AG04449 (cell line): ENCODE measurements at regions of chr12 and their contacts with region 1.

Region 1: GRCh38 chr12:50174971-50175715 is 8.0 kb upstream of the CERS5 start:
- DNase-seq: no peak
- H3K4me3 ChIP-seq: no peak overlapping the region
- CTCF ChIP-seq: peak; percentile 2

Region 2: DNA sequence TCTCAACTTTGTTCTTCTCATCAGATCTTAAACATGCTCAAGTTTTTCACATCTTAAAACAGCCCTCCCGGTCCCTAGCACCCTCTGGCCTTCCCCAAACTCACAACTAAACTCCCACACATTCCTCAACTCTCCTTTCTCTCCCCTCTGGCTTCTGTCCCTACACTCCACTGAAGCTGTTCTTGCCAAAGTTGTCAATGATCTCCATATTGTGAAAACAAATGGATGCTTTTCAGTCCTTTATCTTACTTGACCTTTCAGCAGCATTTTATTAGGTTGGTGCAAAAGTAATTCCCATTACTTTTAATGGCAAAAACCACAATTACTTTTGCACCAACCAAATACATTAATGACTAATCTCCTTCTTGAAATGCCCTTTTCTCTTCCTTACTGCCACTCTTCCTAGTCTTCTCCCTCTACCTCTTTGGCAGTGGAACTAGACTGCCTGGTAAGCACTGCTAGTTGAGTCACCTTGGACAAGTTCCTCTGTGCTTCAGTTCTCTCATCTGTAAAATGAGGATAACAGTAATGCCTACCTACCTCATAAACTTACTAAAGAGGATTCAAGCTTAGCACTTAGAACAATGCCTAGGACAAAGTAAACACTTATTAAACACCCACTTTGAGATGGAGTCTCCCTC is 24.0 kb before region 1 on chr12:
- CTCF ChIA-PET with region 1: interaction called, 23 read pairs
- POLR2A ChIA-PET with region 1: no interaction called
- DNase-seq: no peak
- H3K4me3 ChIP-seq: no peak overlapping the region
- CTCF ChIP-seq: no peak

Region 3: GRCh38 chr12:50187084-50187900 is 12.1 kb after region 1 on chr12:
- CTCF ChIA-PET with region 1: interaction called, 44 read pairs
- POLR2A ChIA-PET with region 1: no interaction called
- DNase-seq: peak; percentile 91
- H3K4me3 ChIP-seq: no peak overlapping the region; the same call in 1 of the 2 replicates
- CTCF ChIP-seq: peak; percentile 14